A673 (cell line): ENCODE measurements at regions of chr14 and their contacts with region 1.

Region 1: DNA sequence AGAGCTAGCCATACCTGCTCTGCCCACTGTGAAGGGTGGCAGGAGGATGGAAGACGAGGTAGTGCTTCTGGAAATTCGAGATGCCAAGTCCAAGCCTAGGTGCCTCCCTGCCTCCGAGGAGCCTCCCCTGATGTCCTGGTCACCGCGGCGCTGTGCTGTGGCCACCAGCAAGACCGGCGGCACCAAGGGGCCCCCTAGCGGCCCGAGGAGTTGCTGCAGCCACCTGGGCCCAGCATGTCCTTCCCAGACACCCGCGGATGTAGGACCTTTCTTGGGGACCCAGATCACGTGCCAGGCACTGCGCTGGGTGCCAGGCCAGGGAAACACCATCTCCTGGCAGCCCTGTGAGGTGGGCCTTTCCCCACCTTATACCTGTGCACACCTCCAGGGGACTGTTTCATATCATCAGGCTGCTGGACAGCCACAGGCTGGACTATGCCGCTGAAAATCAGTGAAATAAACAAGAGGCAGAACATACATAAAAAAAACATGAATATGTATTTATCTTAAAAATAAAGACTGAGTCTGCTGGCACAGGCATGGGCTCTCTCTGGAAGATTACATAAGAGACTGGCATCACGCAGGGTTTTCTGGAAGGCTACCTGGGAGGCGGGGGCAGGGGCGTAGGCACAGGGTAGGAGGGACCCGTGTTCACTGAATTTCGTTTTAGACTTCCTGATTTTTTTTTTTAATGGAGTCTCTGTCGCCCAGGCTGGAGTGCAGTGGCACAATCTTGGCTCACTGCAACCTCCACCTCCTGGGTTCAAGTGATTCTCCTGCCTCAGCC is 15.9 kb upstream of the HHIPL1 start:
- DNase-seq: peak; percentile 75
- H3K4me3 ChIP-seq: no peak overlapping the region
- H3K27ac ChIP-seq: no peak overlapping the region
- H3K4me1 ChIP-seq: no peaks in the 10 kb centered on the region
- H3K27me3 ChIP-seq: no peaks in the 10 kb centered on the region
- CTCF ChIP-seq: peak; percentile 99

Region 2: GRCh38 chr14:99393047-99393655 is 235.9 kb before region 1 on chr14:
- CTCF ChIA-PET with region 1: no interaction called
- POLR2A ChIA-PET with region 1: no interaction called
- intact Hi-C with region 1: loop called (anchors 10 kb)
- DNase-seq: peak; percentile 69
- H3K4me3 ChIP-seq: no peak overlapping the region
- H3K27ac ChIP-seq: no peak overlapping the region
- H3K4me1 ChIP-seq: peaks cover 3% of the 10 kb centered on the region
- H3K27me3 ChIP-seq: no peaks in the 10 kb centered on the region
- CTCF ChIP-seq: peak; percentile 90

Region 3: DNA sequence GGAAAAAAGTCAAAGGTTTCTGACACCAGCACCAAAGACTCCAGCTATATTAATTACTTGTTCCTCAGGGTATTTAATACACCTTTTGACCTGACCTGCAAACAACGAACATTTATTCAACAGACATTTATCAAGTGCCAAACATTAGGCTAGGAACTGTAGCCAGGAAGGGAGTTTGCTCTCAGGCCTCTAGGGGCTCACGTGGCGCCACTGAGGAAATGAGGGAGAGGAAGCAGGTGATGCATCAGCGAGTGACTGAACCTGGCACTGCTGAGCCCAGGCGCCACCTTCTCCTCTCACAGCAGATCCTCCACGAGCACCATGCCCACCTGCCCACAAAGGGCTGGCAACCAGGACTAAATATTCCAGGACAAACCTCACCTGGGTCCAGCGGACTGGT is 198.6 kb before region 1 on chr14:
- CTCF ChIA-PET with region 1: no interaction called
- POLR2A ChIA-PET with region 1: no interaction called
- intact Hi-C with region 1: no loop called
- DNase-seq: no peak
- H3K4me3 ChIP-seq: no peak overlapping the region
- H3K27ac ChIP-seq: no peak overlapping the region
- H3K4me1 ChIP-seq: peaks cover 5% of the 10 kb centered on the region
- H3K27me3 ChIP-seq: no peaks in the 10 kb centered on the region
- CTCF ChIP-seq: peak; percentile 47

Region 4: GRCh38 chr14:99518441-99519346 is 110.3 kb before region 1 on chr14:
- CTCF ChIA-PET with region 1: no interaction called
- POLR2A ChIA-PET with region 1: no interaction called
- intact Hi-C with region 1: loop called (anchors 1 kb)
- DNase-seq: peak; percentile 67
- H3K4me3 ChIP-seq: no peak overlapping the region
- H3K27ac ChIP-seq: no peak overlapping the region
- H3K4me1 ChIP-seq: no peaks in the 10 kb centered on the region
- H3K27me3 ChIP-seq: no peaks in the 10 kb centered on the region
- CTCF ChIP-seq: peak; percentile 98

Region 5: DNA sequence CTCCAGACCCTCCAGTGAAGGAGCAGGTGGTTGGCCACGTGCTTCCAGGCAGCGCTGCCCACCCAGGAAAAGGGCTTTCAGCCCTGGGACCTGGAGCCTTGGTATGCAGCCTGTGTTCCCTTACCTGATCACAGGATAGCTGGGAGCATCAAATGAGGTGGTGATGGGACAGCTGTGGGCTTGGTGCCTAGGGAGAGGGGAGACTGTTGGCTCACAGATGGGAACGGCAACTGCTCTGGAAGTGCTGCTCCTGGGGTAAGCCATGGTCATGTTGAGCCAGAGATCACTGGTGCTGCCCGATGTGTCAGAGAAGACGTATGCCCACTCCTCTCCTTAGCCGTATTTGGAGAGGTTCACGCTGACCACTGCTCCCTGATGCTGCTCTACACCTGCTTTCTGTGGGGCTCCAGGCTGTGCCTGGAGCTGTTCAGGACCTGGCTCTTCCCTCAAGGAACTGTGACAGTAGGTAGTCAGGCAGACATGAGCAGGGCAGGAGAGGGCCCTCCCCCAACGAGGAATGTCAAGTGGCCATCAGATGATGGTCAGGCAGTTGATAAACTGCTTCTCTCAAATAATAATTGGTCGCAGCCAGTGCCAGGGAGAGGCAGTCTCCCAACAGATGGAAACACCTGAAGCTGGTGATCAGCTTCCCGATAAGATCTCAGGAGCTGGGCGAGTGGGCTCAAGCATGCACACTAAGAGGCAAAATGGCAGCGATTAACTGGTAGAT is 52.2 kb after region 1 on chr14:
- CTCF ChIA-PET with region 1: no interaction called
- POLR2A ChIA-PET with region 1: no interaction called
- intact Hi-C with region 1: no loop called
- DNase-seq: no peak
- H3K4me3 ChIP-seq: no peak overlapping the region
- H3K27ac ChIP-seq: no peak overlapping the region
- H3K4me1 ChIP-seq: no peaks in the 10 kb centered on the region
- H3K27me3 ChIP-seq: no peaks in the 10 kb centered on the region
- CTCF ChIP-seq: no peak

Region 6: DNA sequence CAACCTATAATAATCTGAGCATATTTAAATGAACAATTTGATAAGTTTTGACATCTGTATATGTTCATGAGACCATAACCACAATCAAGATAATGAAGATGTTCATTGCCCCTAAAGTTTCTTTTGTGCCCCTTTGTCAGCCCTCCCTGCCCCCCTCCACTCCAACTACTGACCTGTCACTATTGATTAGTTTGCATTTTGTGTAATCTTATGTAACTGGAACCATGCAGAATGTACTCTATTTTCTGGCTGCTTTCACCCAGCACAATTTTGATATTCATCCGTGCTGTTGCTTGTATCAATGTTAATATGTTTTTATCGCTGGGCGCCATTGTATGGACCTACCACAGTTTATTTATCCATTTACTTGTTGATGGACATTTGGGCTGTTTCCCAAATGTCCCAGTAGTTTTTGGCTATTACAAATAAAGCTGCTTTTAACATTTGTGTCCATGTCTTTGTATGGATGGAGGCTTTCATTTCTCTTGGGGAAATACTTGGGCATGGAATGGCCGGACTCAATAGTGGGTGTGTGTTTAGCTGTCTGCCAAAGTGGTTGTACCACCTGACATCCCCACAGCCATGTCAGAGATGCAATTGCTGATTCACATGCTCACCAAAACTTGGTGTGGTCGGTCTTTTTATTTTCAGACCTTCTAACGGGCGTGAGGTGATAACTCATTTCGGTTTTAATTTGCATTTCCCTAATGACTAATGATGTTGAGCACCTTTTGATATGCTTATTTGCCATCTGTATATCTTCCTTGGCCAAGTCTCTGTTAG is 203.1 kb after region 1 on chr14:
- CTCF ChIA-PET with region 1: no interaction called
- POLR2A ChIA-PET with region 1: no interaction called
- intact Hi-C with region 1: no loop called
- DNase-seq: no peak
- H3K4me3 ChIP-seq: no peak overlapping the region
- H3K27ac ChIP-seq: no peak overlapping the region
- H3K4me1 ChIP-seq: no peaks in the 10 kb centered on the region
- H3K27me3 ChIP-seq: no peaks in the 10 kb centered on the region
- CTCF ChIP-seq: no peak

Region 7: DNA sequence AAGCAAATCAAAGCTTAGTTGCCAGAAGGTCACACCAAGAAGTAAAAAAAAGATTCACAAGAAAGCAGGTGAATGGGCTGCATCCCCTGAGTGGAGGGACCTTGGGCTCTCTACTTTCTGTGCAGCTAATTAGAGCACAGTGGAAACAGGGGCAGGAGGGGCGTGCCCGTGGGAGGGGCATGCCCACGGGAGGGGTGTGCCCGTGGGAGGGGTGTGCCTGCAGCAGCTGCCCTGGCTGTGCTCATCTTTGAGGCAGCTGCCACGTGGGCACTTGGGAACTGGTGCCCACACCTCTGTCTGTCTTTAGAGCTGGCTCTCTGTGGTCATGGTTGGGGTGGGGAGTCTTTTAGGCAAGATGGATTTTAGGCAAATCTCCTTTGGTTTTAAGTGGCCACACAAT is 224.2 kb after region 1 on chr14:
- CTCF ChIA-PET with region 1: no interaction called
- POLR2A ChIA-PET with region 1: no interaction called
- intact Hi-C with region 1: no loop called
- DNase-seq: no peak
- H3K4me3 ChIP-seq: no peak overlapping the region
- H3K27ac ChIP-seq: no peak overlapping the region
- H3K4me1 ChIP-seq: no peaks in the 10 kb centered on the region
- H3K27me3 ChIP-seq: no peaks in the 10 kb centered on the region
- CTCF ChIP-seq: no peak